ENCODE measurements at regions of chr17 and their contacts with region 1.

Region 1: GRCh38 chr17:4733073-4733531 is 1.9 kb downstream of the MED11 start:
- DNase-seq: no peak
- H3K4me3 ChIP-seq: no peak overlapping the region
- H3K27ac ChIP-seq: no peak overlapping the region
- H3K4me1 ChIP-seq: peaks cover 5% of the 10 kb centered on the region
- H3K27me3 ChIP-seq: no peaks in the 10 kb centered on the region
- CTCF ChIP-seq: no peak

Region 2: GRCh38 chr17:4375039-4375748 is 357.9 kb before region 1 on chr17:
- CTCF ChIA-PET with region 1: no interaction called
- dilution Hi-C with region 1: no loop called
- in situ Hi-C with region 1: no loop called
- intact Hi-C with region 1: no loop called
- DNase-seq: no peak
- H3K4me3 ChIP-seq: no peak overlapping the region
- H3K27ac ChIP-seq: no peak overlapping the region
- H3K4me1 ChIP-seq: no peaks in the 10 kb centered on the region
- H3K27me3 ChIP-seq: no peaks in the 10 kb centered on the region
- CTCF ChIP-seq: no peak

Region 3: DNA sequence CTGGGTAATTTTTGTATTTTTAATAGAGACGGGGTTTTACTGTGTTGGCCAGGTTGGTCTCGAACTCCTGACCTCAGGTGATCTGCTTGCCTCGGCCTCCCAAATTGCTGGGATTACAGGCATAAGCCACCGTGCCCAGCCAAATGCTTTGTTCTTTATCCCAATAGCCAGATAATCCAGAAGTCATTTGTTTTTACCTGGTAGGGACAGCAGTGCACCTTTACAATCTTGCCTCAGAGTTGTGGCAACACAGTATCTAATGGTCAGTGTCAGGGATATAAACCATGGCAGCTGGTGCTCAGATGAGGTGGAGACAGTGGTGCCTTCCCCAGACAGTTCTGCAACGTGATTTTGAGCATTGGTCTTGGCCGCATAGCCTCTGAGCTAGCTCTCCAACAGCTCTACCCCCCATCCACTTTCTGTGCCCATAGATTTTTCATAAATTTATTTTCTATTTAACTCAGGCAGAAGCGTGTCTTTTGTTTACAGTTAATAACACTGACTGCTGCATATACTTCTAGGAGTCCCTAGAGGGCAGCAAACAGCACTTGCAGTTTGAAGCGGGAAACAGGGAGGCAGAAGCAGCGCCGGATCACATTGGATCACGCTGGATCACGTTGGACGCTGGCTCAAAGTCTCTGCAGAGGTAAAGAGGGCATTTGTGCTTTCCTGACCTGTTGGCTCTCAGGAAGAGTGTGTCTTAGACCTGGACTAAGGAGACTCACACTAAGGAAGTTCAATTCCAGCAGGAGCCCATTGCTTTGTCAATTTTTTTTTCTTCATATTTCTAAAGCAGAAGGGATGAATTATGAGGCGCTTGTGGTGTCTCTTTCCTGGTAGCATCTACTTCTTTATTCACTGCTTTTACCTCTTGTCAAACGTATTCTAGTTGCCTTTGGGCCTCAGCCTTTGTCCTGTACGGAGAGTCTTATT is 167.6 kb before region 1 on chr17:
- CTCF ChIA-PET with region 1: no interaction called
- dilution Hi-C with region 1: loop called (anchors 5 kb)
- in situ Hi-C with region 1: no loop called
- intact Hi-C with region 1: no loop called
- DNase-seq: peak; percentile 61
- H3K4me3 ChIP-seq: no peak overlapping the region
- H3K27ac ChIP-seq: no peak overlapping the region
- H3K4me1 ChIP-seq: peaks cover 17% of the 10 kb centered on the region
- H3K27me3 ChIP-seq: no peaks in the 10 kb centered on the region
- CTCF ChIP-seq: peak; percentile 90 to 92

Region 4: GRCh38 chr17:4616476-4616875 is 116.6 kb before region 1 on chr17:
- CTCF ChIA-PET with region 1: no interaction called
- dilution Hi-C with region 1: no loop called
- in situ Hi-C with region 1: no loop called
- intact Hi-C with region 1: no loop called
- DNase-seq: no peak
- H3K4me3 ChIP-seq: no peak overlapping the region
- H3K27ac ChIP-seq: no peak overlapping the region
- H3K4me1 ChIP-seq: no peaks in the 10 kb centered on the region
- H3K27me3 ChIP-seq: no peaks in the 10 kb centered on the region
- CTCF ChIP-seq: no peak

Region 5: DNA sequence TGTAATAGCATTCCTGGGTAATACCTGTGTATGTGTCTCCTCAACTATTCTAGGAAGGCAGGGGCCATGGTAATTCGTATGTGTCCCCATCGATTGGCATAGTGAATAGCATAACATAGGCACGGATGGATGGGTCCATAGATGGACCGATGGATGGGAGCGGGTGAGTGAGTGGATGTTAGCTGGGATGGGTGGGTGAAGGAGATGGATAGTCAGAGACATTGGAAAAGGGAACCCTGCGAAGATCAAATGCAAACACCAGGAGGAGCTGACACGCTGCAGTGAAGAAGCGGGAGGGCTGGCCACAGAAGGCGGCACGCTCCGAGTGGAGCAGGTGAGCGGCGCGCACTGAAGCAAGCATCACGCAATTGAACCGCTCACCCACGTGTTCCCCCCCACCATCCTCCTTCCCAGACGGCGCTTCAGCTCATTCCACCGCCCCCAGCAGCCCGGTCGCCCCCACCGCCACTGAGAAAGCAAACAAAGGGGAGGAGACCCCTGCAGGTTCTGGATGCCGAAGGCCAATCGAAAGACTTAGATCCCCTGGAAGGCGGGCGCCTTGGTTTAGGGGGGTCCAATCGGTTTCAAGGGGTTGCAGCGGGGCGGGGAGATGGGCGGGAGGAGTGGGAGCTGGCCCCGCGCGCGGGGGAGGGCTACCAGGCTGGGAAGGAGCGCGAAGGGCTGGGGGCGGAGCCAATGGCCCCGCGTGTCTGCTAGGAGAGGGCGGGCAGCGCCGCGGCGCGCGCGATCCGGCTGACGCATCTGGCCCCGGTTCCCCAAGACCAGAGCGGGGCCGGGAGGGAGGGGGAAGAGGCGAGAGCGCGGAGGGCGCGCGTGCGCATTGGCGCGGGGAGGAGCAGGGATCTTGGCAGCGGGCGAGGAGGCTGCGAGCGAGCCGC is 23.1 kb before region 1 on chr17 and contains the start of gene ARRB2:
- CTCF ChIA-PET with region 1: no interaction called
- dilution Hi-C with region 1: no loop called
- in situ Hi-C with region 1: no loop called
- intact Hi-C with region 1: loop called (anchors 1 kb)
- DNase-seq: peak; percentile 98
- H3K4me3 ChIP-seq: peak within 1 kb of the TSS; percentile 50 to 63 (median 63)
- H3K27ac ChIP-seq: peak within 1 kb of the TSS; percentile 14
- H3K4me1 ChIP-seq: peaks cover 14% of the 10 kb centered on the region
- H3K27me3 ChIP-seq: no peaks in the 10 kb centered on the region
- CTCF ChIP-seq: peak; percentile 35 to 72
- total RNA-seq, gene ARRB2: 3.5 to 14.4 TPM

Region 6: DNA sequence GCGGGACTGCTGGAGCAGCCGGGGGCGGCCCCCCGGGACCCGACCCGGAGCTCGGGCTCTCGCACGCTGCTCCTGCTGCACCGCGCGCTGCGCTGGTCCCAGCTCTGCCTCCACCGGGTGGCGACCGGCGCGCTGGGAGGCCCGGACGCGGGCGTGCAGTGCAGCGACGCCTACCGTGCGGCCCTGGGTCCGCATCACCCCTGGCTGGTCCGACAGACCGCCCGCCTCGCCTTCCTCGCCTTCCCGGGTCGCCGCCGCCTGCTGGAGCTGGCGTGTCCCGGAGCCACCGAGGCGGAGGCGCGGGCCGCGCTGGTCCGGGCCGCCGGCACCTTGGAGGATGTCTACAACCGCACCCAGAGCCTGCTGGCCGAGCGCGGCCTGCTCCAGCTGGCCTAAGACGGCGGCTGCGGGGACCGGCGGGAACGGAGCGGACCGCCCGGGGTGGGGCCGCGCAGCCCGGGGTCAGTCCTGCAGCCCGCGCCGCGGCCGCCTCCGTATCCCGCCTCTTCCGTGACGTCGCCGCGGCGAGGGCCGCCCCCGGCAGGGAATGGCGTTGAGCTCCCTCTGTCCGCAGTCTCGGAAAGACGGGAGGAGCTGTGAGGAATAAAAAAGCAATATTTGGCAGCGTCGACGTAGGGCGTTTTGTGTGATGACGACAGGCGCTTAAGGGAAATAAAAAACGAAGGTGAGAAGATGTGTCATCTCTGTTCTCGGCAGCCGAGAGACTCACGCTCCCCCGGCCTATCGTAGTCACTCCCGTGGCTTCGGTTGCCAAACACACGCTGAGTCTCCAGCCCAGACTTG is 57.0 kb after region 1 on chr17:
- CTCF ChIA-PET with region 1: no interaction called
- dilution Hi-C with region 1: no loop called
- in situ Hi-C with region 1: no loop called
- intact Hi-C with region 1: loop called (anchors 1 kb)
- DNase-seq: peak; percentile 96
- H3K4me3 ChIP-seq: peak overlapping the region; percentile 63 to 80 (median 71)
- H3K27ac ChIP-seq: peak overlapping the region; percentile 69
- H3K4me1 ChIP-seq: peaks cover 26% of the 10 kb centered on the region
- H3K27me3 ChIP-seq: no peaks in the 10 kb centered on the region
- CTCF ChIP-seq: peak; percentile 45 to 72

Region 7: DNA sequence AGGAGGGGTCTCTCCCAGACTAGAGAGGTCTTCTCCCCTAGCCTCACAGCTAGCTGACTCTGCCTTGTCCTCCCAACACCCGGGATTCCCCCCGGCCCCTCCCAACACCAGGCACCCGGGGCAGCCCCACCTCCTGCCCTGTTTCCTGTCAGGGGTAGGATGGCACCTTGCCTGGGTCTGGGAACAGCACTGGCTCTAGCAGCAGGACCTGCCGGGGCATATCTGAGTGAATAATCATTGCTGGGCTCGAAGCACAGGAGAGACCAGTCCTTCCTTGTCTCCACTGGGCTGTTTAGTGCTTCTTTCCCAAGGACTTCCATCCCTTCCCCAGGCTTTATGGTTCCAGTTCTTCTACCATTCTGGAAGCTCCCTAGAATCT is 125.8 kb after region 1 on chr17:
- CTCF ChIA-PET with region 1: no interaction called
- dilution Hi-C with region 1: loop called (anchors 5 kb)
- in situ Hi-C with region 1: no loop called
- intact Hi-C with region 1: no loop called
- DNase-seq: peak; percentile 93
- H3K4me3 ChIP-seq: peak overlapping the region; percentile 50 to 91 (median 78)
- H3K27ac ChIP-seq: peak overlapping the region; percentile 83
- H3K4me1 ChIP-seq: peaks cover 60% of the 10 kb centered on the region
- H3K27me3 ChIP-seq: no peaks in the 10 kb centered on the region
- CTCF ChIP-seq: no peak

Region 8: DNA sequence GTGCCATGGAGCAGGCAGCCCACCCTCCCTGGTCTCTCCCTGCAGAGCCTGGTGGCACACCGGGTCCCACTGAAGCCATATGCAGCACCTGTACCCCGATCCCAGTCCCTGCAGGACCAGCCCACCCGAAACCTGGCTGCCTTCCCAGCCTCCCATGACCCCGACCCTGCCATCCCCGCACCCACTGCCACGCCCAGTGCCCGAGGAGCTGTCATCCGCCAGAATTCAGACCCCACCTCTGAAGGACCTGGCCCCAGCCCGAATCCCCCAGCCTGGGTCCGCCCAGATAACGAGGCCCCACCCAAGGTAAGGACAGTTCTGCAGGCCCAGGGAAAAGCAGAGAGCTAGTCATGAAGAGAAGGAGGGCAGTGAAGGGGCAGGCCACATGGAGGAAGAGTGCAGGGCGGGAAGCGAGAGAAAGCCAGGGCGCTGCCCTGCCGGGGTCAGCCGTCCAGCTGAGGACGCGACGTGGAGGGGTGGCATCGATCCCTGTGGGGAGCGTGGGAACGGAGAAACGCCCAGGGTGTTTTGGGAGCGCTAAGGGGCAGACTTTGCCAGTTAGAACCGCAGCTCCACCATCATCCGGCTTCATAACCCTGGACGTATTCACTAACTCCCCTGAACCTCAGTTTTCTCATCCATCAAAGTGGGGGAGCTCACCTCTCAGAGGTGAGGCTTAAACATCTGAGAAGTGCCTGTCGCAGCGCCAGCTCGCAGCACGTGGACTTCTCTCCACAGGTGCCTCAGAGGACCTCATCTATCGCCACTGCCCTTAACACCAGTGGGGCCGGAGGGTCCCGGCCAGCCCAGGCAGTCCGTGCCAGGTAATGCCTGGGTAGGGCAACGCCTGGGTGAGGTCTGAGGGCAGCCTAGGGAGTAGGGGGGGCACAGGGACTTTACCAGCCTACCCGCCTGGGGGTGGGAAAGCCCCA is 158.6 kb after region 1 on chr17:
- CTCF ChIA-PET with region 1: no interaction called
- dilution Hi-C with region 1: no loop called
- in situ Hi-C with region 1: loop called (anchors 10 kb)
- intact Hi-C with region 1: loop called (anchors 1 kb)
- DNase-seq: no peak
- H3K4me3 ChIP-seq: no peak overlapping the region
- H3K27ac ChIP-seq: no peak overlapping the region
- H3K4me1 ChIP-seq: no peaks in the 10 kb centered on the region
- H3K27me3 ChIP-seq: no peaks in the 10 kb centered on the region
- CTCF ChIP-seq: no peak

Region 9: GRCh38 chr17:4948931-4949320 is 215.8 kb after region 1 on chr17:
- CTCF ChIA-PET with region 1: no interaction called
- dilution Hi-C with region 1: no loop called
- in situ Hi-C with region 1: no loop called
- intact Hi-C with region 1: loop called (anchors 5 kb)
- DNase-seq: peak; percentile 91
- H3K4me3 ChIP-seq: peak overlapping the region; percentile 74 to 100 (median 98)
- H3K27ac ChIP-seq: peak overlapping the region; percentile 67
- H3K4me1 ChIP-seq: peaks cover 29% of the 10 kb centered on the region
- H3K27me3 ChIP-seq: no peaks in the 10 kb centered on the region
- CTCF ChIP-seq: no peak

Measured in mammary epithelial cell (primary cell).